Astrocyte of the cerebellum (primary cell): ENCODE measurements at regions of chr1 and their contacts with region 1.

Region 1: DNA sequence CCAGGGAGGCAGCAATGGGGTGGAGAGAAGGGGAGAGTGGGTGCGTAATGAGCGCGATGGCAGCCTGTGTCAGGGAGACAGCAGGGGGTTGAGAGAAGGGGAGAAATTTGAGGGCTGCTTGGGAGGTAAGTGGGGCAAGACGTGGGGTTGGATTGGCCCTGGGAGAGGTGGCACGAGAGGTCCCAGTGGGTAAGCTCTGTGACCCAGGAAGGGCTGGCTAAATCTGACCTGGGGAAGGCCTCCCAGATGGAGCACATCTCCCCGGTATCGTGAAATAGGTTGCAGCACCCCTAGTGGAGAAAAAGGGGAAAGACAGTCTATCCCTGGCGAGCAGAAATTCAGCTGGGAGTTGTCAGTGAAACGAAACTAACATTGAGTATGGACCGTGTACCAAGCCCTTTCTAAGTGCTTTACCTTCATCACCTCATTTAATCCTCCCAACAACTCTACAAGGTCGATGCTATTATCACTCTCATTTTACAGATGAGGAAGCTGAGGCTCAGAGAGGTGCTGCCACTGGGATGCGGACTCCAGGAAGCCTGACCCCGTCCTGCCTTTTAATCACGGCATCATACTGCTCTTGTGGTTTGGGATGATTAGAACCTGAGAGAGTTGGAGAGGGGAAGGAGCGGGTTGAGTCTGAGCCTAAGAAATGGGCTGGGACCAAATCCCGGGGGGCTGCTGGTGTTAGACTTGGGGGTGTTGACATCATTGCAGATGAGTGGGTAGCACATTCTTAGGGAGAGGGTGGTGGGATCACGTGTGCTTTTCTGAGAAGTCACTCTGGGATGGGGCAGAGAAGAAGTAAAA is 56.6 kb upstream of the RPL11 start:
- DNase-seq: peak; percentile 54
- H3K4me3 ChIP-seq: peak overlapping the region; percentile 23
- CTCF ChIP-seq: peak; percentile 91

Region 2: DNA sequence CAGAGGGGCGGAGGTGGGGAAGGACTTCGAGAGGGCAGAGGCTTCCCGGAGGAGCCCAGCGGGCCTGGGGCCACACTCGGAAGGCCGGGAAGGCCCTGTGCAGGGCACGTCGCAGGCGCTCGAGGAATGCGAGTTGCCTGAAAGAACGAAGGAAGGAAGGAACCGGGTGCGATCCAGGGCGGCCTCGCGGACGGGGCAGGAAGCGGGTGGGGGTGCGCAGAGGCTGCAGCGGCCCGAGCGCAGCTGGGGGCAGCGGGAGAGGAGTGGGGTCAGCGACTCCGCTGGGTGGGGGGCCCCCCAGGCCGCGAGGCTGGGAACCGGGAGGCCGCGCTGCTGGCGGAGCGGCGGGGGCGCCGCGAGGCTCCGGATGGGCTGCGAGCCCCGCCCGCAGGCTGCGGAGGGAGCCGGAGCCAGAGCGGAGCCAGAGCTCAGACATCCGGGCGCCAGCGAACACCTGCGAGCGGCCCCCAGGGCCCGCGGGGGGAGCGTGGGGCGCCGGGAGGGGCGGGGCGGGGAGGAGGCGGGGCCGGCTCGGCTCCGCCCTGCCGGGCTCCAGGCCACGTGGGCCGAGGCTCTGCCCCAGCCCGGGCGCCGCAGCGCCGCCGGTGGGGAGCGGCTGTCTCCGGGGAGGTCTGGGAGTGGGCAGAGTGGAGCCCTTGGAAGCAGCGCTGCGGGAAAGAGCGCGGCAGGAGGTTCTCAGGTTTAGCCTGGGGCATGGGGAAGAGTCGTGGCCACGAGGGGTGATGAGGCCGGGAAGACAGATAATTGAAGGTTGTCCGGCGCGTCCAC is 80.4 kb before region 1 on chr1:
- in situ Hi-C with region 1: loop called (anchors 5 kb)
- DNase-seq: peak; percentile 68
- H3K4me3 ChIP-seq: peak overlapping the region; percentile 98
- CTCF ChIP-seq: peak; percentile 19